GM10248 (cell line): ENCODE measurements at regions of chr11 and their contacts with region 1.

Region 1: DNA sequence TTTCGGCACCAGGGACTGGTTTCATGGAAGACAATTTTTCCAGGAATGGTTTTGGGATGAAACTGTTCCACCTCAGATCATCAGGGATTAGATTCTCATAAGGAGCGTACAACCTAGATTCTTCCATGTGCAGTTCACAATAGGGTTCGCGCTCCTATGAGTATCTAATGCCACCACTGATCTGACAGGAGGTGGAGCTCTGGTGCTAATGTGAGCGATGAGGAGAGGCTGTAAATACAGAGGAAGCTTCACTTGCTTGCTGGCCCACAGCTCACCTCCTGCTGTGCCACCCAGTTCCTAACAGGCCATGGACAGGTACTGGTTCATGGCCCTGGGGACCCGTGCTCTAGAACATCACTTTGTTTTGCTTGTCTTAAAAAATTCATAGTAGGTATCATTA is 41.8 kb upstream of the AMPD3 start:
- DNase-seq: no peak
- CTCF ChIP-seq: peak; percentile 69

Region 2: GRCh38 chr11:10382518-10382917 is 30.8 kb before region 1 on chr11:
- CTCF ChIA-PET with region 1: no interaction called
- POLR2A ChIA-PET with region 1: no interaction called
- DNase-seq: no peak
- CTCF ChIP-seq: no peak

Region 3: DNA sequence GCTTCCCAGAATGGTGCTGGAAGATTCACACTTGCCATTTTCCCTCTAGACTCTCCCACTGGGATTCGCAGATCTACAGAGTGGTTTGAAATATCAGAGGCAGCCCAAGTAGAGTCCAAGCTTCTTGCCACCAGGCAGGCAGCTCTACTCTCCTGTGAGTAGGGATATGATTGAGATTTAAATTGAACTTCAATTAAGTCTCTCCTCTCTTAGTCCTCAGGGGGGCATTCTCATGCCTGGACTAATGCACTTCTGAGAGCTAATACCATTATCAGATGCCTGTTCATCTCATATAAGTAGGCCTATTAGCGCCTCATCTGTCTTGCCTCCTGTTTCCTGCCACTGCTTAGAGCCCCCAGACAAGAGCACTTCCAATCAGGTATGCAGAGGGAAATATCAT is 16.3 kb after region 1 on chr11:
- CTCF ChIA-PET with region 1: interaction called, 20 read pairs
- POLR2A ChIA-PET with region 1: no interaction called
- DNase-seq: no peak
- CTCF ChIP-seq: no peak

Region 4: DNA sequence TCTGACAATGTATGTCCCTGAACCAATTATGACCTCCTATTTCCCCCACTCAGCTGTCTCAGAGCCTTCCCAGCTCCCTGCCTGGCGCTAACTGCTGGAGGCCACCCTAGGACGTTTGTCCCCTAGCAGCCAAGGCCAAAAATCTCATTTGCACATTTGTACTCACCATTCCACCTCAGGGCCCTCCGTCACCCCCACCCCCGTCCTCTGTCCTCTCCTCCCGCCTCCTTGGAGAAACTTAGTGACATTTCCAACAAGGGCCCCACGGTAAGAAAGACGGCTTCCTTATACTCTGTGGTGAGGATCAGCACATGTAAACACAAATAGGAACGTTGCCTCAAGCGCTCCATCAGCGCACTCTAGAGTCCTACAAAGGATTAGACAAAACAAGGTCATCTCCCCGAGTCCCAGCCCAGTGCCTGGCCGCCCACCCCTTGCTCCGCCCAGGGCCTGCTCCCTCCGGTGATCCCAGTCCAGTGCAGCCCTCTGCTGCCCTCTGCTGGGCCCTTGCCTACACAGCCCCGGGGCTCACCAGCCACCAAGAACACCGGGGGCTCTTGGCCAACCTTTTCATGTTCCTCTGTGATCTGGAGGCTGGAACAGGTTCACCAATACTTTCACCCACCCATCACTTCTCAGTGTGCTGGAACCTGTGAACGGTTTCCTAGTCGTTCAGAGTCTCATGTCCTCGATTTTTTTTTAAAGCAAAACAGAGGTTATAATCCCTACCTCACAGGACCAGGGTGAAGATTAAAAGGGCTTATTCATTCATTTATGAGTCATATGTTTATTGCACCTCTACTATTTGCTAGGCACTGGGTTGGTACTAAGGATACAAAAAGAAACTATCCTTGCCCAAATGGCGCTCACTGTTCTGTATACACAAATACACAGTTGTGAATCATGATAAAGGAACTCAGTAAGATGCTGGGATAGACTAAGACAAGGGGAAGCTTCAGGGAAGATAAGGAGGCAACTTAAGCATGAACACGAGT is 322.5 kb after region 1 on chr11:
- CTCF ChIA-PET with region 1: interaction called, 20 read pairs
- POLR2A ChIA-PET with region 1: no interaction called
- DNase-seq: peak; percentile 91
- CTCF ChIP-seq: peak; percentile 91